ENCODE measurements at regions of chr10 and their contacts with region 1.

Region 1: GRCh38 chr10:129971381-129972144 is 7.5 kb upstream of the EBF3 start:
- DNase-seq: peak; percentile 22
- ATAC-seq: peak; percentile 94
- H3K4me3 ChIP-seq: peak overlapping the region; percentile 26; the same call in 1 of the 2 replicates
- H3K27ac ChIP-seq: no peak overlapping the region
- H3K4me1 ChIP-seq: no peaks in the 10 kb centered on the region
- H3K27me3 ChIP-seq: peaks cover 69% of the 10 kb centered on the region
- CTCF ChIP-seq: peak; percentile 69
- POLR2A ChIP-seq: no peak
- RAD21 ChIP-seq: peak; percentile 76

Region 2: DNA sequence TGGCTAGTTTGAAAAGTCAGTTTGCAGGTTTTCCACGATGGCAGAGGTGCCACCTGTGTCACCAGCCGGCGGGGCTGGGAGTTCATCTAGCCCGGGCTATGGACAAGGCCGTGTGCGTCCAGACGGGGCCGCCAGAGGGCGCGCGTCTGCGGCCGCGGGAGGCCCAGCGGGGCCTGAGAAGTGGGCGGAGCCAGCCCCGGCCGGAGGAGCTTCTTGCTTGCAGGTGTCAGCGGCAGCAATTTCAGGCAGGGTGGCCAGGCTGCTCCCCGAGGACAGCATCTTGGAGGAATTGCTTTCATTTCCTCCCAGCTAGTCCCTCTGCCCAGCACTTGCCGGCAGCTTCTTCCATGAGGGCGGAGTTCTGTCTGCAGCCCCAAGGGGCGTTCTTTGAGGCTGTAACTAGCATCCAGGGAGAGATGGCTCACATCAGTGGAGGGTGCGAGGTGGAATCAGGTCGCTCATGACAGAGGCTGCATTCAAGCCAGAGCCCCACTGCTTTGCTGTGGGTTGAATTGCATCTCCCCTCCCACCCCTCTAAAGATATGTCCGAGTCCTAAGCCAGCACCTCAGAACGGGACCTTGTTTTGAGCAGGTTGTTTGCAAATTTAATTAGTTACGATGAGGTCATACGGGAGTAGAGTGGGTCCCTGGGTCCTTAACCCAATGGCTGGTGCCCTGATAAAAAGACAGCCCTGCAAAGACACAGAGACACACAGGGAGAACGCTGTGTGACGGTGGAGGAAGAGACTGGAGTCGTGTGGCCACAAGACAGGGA is 1759.4 kb before region 1 on chr10:
- CTCF ChIA-PET with region 1: interaction called, 6 read pairs
- POLR2A ChIA-PET with region 1: no interaction called
- dilution Hi-C with region 1: no loop called
- in situ Hi-C with region 1: loop called (anchors 10 kb)
- intact Hi-C with region 1: loop called (anchors 1 kb)
- DNase-seq: peak; percentile 41
- ATAC-seq: peak; percentile 95
- H3K4me3 ChIP-seq: no peak overlapping the region
- H3K27ac ChIP-seq: no peak overlapping the region
- H3K4me1 ChIP-seq: no peaks in the 10 kb centered on the region
- H3K27me3 ChIP-seq: no peaks in the 10 kb centered on the region; the same call in 1 of the 2 replicates
- CTCF ChIP-seq: peak; percentile 86
- POLR2A ChIP-seq: no peak
- RAD21 ChIP-seq: peak; percentile 49

Region 3: DNA sequence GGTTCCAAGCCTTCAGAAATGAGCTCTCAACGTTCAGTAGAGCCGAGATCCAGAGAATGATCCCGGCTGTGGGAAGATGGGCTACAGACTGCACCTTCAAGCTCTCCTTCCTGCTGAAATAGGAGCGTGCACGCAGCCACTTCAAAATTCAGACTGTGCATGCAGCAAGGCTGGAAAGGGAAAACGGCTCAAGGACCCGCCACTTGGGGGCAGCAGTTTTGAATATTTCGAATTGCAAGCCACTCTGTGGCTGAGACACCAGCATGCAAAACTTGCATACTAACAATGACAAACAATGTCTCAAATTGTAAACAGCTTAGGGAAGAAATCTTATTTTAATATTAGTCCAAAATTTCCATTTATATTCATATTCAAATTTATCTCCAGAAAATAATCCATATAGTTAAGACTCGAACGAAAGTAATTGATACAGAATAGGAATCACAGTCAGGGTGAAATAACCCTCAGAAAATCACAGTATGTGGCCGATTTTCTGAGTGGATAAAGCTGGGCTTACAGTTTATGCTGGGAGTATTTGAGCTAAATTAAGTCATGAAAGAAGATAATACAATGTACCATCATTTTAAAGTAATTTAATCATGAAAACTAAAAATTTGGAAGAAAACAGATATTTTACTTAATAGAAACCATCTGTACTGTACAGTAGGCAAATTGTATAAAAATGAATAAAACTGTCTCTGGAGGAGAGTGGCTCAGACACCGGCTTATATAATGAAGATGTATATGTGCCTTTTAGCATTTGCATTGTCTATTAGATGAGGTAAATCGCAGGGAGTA is 1707.5 kb before region 1 on chr10:
- CTCF ChIA-PET with region 1: no interaction called
- POLR2A ChIA-PET with region 1: no interaction called
- dilution Hi-C with region 1: no loop called
- in situ Hi-C with region 1: no loop called
- intact Hi-C with region 1: loop called (anchors 1 kb)
- DNase-seq: peak; percentile 25
- ATAC-seq: peak; percentile 85
- H3K4me3 ChIP-seq: no peak overlapping the region
- H3K27ac ChIP-seq: no peak overlapping the region
- H3K4me1 ChIP-seq: no peaks in the 10 kb centered on the region
- H3K27me3 ChIP-seq: no peaks in the 10 kb centered on the region
- CTCF ChIP-seq: peak; percentile 45
- POLR2A ChIP-seq: no peak
- RAD21 ChIP-seq: peak; percentile 34; the same call in 1 of the 2 replicates

Region 4: DNA sequence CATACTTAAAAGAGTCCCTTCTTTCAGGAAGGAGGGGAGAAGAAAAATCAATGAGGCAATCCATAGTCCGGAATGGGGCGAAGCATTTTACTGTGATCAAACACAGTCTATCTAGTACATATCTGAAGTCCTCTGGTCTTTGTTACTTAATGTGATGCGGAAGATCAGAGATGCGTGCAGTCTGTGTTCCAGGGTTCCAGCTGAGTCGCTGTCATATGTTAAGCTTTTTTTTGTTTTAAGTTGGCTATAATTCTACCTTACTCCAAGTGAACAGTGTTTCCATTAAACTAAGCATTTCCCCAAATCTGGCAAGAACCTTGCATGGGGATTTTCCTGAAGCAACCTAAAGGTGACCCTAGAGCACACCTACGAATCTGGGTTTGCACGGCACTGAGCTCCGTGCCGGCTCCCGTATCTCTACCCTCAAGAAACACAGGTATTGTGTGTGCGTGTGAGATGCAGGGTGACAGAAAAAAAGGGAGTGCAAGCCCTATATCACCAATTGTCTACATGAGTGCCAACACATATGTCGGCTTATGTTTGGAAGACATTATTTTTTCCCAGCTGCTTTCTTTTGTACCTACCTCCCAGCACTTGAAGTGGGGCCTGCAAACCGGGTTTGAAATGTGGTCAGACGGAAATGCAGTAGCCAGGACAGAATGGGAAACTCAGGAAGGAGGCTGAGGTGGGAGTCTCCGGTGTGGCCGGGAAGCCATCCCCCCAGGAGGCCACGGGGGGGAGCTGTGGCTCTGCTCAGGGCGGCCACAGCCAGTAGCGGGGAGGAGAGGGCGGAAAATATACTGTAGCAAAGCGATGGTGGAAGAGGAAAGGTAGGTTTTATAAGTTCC is 940.3 kb before region 1 on chr10:
- CTCF ChIA-PET with region 1: no interaction called
- POLR2A ChIA-PET with region 1: no interaction called
- dilution Hi-C with region 1: no loop called
- in situ Hi-C with region 1: loop called (anchors 10 kb)
- intact Hi-C with region 1: loop called (anchors 1 kb)
- DNase-seq: peak; percentile 12
- ATAC-seq: peak; percentile 98
- H3K4me3 ChIP-seq: no peak overlapping the region
- H3K27ac ChIP-seq: no peak overlapping the region
- H3K4me1 ChIP-seq: no peaks in the 10 kb centered on the region
- H3K27me3 ChIP-seq: no peaks in the 10 kb centered on the region
- CTCF ChIP-seq: peak; percentile 57
- POLR2A ChIP-seq: no peak
- RAD21 ChIP-seq: peak; percentile 73

Region 5: GRCh38 chr10:130110246-130111112 is 138.9 kb after region 1 on chr10 and contains the start of gene C10orf143:
- CTCF ChIA-PET with region 1: no interaction called
- POLR2A ChIA-PET with region 1: no interaction called
- dilution Hi-C with region 1: no loop called
- in situ Hi-C with region 1: no loop called
- intact Hi-C with region 1: loop called (anchors 5 kb)
- DNase-seq: peak; percentile 96
- ATAC-seq: peak; percentile 91
- H3K4me3 ChIP-seq: peak within 1 kb of the TSS; percentile 71
- H3K27ac ChIP-seq: peak within 1 kb of the TSS; percentile 81
- H3K4me1 ChIP-seq: no peaks in the 10 kb centered on the region
- H3K27me3 ChIP-seq: no peaks in the 10 kb centered on the region
- CTCF ChIP-seq: no peak
- POLR2A ChIP-seq: peak; percentile 75
- RAD21 ChIP-seq: no peak
- total RNA-seq, gene C10orf143: 0.36 and 0.56 TPM in 2 replicates

Region 6: DNA sequence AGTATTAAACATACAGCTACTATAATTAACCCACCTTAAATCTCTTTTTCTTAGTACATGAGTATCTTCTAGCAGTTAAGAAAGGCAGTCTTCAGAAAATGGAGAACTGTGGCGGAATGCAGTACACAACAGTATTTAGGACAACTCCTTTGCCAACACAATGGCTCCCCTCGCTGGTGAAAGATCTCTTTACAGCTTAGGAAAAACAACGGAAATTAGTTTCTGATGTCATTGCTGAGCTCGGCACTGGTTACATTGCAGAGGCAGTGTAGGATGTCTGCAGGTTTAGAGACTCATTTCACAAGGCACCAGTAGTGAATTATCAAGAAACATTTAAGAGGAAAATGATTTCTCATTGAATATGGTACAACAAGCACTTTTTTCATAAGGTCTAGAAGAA is 208.1 kb after region 1 on chr10:
- CTCF ChIA-PET with region 1: no interaction called
- POLR2A ChIA-PET with region 1: no interaction called
- dilution Hi-C with region 1: no loop called
- in situ Hi-C with region 1: no loop called
- intact Hi-C with region 1: loop called (anchors 1 kb)
- DNase-seq: peak; percentile 78
- ATAC-seq: peak; percentile 94
- H3K4me3 ChIP-seq: no peak overlapping the region
- H3K27ac ChIP-seq: no peak overlapping the region
- H3K4me1 ChIP-seq: no peaks in the 10 kb centered on the region
- H3K27me3 ChIP-seq: no peaks in the 10 kb centered on the region
- CTCF ChIP-seq: peak; percentile 60
- POLR2A ChIP-seq: no peak
- RAD21 ChIP-seq: peak; percentile 65

Region 7: DNA sequence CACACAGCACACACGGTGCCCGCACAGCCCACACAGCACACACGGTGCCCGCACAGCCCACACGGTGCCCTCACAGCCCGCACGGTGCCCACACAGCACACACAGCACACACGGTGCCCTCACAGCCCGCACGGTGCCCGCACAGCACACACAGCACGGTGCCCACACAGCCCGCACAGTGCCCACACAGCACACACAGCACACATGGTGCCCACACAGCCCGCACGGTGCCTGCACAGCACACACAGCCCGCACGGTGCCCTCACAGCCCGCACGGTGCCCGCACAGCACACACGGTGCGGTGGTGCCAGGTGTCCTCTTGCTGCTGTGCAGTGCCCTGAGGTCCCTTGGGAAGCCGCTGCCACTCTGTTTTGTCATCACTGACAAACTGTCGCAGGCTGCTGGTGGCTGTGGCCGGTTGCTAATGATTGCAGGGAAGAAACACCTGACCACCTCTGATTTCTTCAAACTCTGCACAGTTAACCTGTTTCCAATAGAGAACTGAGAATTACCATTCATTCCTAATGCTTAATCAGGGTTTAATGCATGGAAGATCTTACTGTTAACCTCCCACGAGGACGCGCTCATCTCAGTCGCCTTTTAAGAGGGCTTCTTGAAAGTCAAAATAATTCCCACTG is 231.5 kb after region 1 on chr10:
- CTCF ChIA-PET with region 1: no interaction called
- POLR2A ChIA-PET with region 1: no interaction called
- dilution Hi-C with region 1: no loop called
- in situ Hi-C with region 1: no loop called
- intact Hi-C with region 1: no loop called
- DNase-seq: no peak
- ATAC-seq: no peak; the same call in 1 of the 2 replicates
- H3K4me3 ChIP-seq: no peak overlapping the region
- H3K27ac ChIP-seq: no peak overlapping the region
- H3K4me1 ChIP-seq: no peaks in the 10 kb centered on the region
- H3K27me3 ChIP-seq: no peaks in the 10 kb centered on the region; the same call in 1 of the 2 replicates
- CTCF ChIP-seq: no peak
- POLR2A ChIP-seq: no peak
- RAD21 ChIP-seq: no peak